Stomach (tissue), 19 donors: ENCODE measurements at regions of chr10 and their contacts with region 1.

Region 1: DNA sequence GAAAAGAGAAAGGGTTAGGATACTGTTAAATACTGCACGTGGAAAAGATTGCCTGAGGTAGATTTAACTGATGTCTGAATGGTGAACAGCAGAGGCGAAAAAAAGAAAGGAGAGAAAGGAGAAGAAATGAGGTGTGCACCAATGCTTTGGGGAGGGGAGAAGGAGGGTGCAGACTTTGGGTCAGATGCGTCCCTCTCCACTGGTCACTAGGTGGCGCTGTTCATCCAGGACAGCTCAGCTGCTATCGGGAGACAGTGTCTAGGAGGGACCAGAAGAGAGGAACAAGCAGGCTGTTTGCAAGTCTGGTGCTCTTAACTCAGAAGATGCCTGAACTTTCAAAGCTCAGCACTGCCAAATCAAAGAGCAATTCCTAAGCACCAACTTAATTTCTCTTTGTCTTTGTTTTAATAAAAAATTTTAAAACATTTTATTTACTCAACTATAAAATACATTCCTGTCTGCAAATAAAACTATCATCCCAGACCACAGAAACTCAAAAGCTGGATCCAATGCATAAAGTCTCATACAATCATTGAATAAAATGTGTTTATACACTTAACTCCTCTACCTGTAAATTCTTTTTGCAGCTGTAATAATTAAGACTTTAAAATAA is 83.9 kb upstream of the PDLIM1 start:
- DNase-seq: peak; percentile 81 to 92
- H3K4me3 ChIP-seq: no peak overlapping the region
- H3K27ac ChIP-seq: peak overlapping the region in 2 of 5 donors; percentile 22 to 76
- H3K4me1 ChIP-seq: peaks cover 5 to 60% (median 28%) of the 10 kb centered on the region in 4 donors
- H3K27me3 ChIP-seq: no peaks in the 10 kb centered on the region
- CTCF ChIP-seq: peak in 5 of 7 experiments; percentile 70 to 98 (median 89)
- EP300 ChIP-seq: no peak
- POLR2A ChIP-seq: no peak

Region 2: GRCh38 chr10:95327367-95327766 is 47.3 kb before region 1 on chr10:
- intact Hi-C with region 1: no loop called
- DNase-seq: peak; percentile 85 to 86
- H3K4me3 ChIP-seq: no peak overlapping the region
- H3K27ac ChIP-seq: peak overlapping the region; percentile 57 to 89 (median 67)
- H3K4me1 ChIP-seq: peaks cover 12 to 68% (median 41%) of the 10 kb centered on the region in 4 donors
- H3K27me3 ChIP-seq: no peaks in the 10 kb centered on the region
- CTCF ChIP-seq: peak in 2 of 7 experiments; percentile 10 to 12
- EP300 ChIP-seq: no peak
- POLR2A ChIP-seq: no peak

Region 3: DNA sequence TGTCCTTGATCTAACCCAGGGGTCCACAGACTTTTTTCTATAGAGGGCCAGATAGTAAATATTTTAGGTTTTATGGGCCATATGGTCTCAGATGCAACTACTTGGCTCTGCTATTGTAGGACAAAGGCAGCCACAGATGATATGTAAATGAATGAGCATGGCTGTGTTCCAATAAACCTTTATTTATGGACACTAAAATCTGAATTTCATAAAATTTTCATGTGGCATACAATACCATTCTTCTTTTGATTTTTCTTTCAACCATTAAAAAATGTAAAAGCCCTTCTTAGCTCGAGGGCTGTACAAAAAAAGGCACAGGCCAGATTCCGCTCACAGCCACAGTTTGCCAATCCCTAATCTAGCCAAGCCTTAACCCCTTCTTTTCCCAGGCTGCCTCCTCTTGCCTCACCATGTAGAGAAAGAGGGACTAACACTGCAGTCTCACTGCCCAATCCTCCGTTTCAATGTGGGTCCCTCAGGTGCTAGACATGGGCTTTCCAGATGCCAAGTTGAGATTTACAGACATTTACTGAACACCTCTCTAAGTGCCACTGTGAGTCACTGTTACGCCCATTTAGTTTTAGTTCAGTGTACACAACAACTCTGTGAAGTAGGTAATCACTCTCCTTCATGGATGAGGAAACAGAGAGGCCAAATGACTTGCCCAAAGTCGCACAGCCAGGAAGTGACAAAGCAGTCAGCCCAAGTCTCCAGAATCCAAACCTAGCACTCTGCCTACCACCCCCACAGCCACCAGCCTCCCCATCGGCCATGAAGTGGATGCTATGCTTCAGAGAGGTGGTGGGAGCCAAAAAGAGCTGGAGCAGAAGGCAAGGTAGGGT is 48.7 kb after region 1 on chr10:
- intact Hi-C with region 1: loop called (anchors 10 kb)
- DNase-seq: no peak
- H3K4me3 ChIP-seq: no peak overlapping the region
- H3K27ac ChIP-seq: peak overlapping the region in 4 of 5 donors; percentile 4 to 95 (median 60)
- H3K4me1 ChIP-seq: peaks cover 21 to 89% (median 60%) of the 10 kb centered on the region in 4 donors
- H3K27me3 ChIP-seq: no peaks in the 10 kb centered on the region
- CTCF ChIP-seq: no peak
- EP300 ChIP-seq: no peak
- POLR2A ChIP-seq: no peak

Region 4: GRCh38 chr10:95601116-95601719 is 226.5 kb after region 1 on chr10:
- intact Hi-C with region 1: loop called (anchors 5 kb)
- DNase-seq: peak; percentile 87 to 96
- H3K4me3 ChIP-seq: no peak overlapping the region
- H3K27ac ChIP-seq: peak overlapping the region in 4 of 5 donors; percentile 15 to 88 (median 30)
- H3K4me1 ChIP-seq: peaks cover 0 to 25% (median 5%) of the 10 kb centered on the region in 4 donors
- H3K27me3 ChIP-seq: no peaks in the 10 kb centered on the region
- CTCF ChIP-seq: peak in 6 of 7 experiments; percentile 58 to 99 (median 91)
- EP300 ChIP-seq: no peak
- POLR2A ChIP-seq: no peak